ENCODE measurements at regions of chr3 and their contacts with region 1.

Region 1: GRCh38 chr3:175208330-175208729 is 349.2 kb downstream of the NAALADL2 start:
- DNase-seq: no peak
- H3K4me3 Mint-ChIP-seq: no peak overlapping the region
- H3K27ac Mint-ChIP-seq: no peak overlapping the region
- H3K4me1 Mint-ChIP-seq: no peaks in the 10 kb centered on the region
- H3K27me3 Mint-ChIP-seq: no peaks in the 10 kb centered on the region

Region 2: DNA sequence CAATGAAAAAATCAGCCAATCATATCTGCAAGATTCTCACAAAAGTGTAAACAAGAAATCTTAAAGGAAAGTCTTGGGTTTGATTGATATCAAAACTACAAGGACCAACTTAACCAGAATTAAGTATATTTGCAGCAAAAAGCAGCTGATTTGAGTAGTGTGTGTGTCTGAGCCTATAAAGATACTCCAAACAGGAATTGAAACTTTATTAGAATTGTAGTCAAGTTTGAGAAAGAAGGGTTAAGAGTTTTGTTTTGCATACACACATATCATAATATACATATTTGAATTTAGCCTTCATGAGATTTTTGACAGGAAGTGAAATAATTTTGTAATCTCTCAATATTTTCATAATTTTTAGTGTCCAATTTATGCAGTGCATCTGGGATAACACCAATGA is 49.1 kb before region 1 on chr3:
- intact Hi-C with region 1: loop called (anchors 2 kb)
- DNase-seq: no peak
- H3K4me3 Mint-ChIP-seq: no peak overlapping the region
- H3K27ac Mint-ChIP-seq: no peak overlapping the region
- H3K4me1 Mint-ChIP-seq: no peaks in the 10 kb centered on the region
- H3K27me3 Mint-ChIP-seq: no peaks in the 10 kb centered on the region

Region 3: GRCh38 chr3:175224051-175224450 is 15.7 kb after region 1 on chr3:
- intact Hi-C with region 1: no loop called
- DNase-seq: no peak
- H3K4me3 Mint-ChIP-seq: no peak overlapping the region
- H3K27ac Mint-ChIP-seq: no peak overlapping the region
- H3K4me1 Mint-ChIP-seq: no peaks in the 10 kb centered on the region
- H3K27me3 Mint-ChIP-seq: no peaks in the 10 kb centered on the region

Region 4: DNA sequence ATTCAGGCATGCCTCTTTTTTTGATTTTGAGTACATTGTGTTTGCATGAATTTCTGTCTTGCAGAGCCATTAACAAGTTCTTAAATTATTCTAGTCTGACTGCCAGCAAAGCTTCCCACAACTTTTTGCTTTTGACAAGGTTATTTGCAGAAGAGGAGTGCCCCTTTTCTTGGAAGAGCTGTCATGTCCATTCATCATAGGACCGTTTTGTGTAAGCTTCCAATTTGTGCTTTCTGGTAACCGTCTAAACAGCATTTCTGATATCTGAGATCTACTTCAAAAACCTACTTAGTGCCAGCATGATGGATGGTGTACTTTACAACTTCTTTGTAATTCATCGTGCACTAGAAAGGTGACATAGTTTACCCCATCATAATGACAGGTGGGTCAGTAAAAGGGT is 30.5 kb after region 1 on chr3:
- intact Hi-C with region 1: no loop called
- DNase-seq: no peak
- H3K4me3 Mint-ChIP-seq: no peak overlapping the region
- H3K27ac Mint-ChIP-seq: no peak overlapping the region
- H3K4me1 Mint-ChIP-seq: no peaks in the 10 kb centered on the region
- H3K27me3 Mint-ChIP-seq: no peaks in the 10 kb centered on the region

Region 5: GRCh38 chr3:175726228-175726627 is 517.9 kb after region 1 on chr3:
- intact Hi-C with region 1: no loop called
- DNase-seq: no peak
- H3K4me3 Mint-ChIP-seq: no peak overlapping the region
- H3K27ac Mint-ChIP-seq: no peak overlapping the region
- H3K4me1 Mint-ChIP-seq: no peaks in the 10 kb centered on the region
- H3K27me3 Mint-ChIP-seq: no peaks in the 10 kb centered on the region

Measured in activated T-helper 2 cell treated with anti-CD3 and anti-CD28 coated beads, Interferon-gamma antibody, Interleukin-2, Interleukin-4, amounts not matched to agents 10 μg/mL and 5 μg/mL and 100 μg/mL, durations not matched to agents 14 hours and 24 hours and 36 hours (primary cell).